Endothelial cell of umbilical vein (primary cell): ENCODE measurements at regions of chr1 and their contacts with region 1.

Region 1: GRCh38 chr1:244272471-244273261 is 179.0 kb downstream of the ADSS2 start:
- DNase-seq: peak; percentile 95
- H3K4me3 ChIP-seq: no peak overlapping the region
- H3K27ac ChIP-seq: peak overlapping the region; percentile 58
- H3K4me1 ChIP-seq: peaks cover 21% of the 10 kb centered on the region
- H3K27me3 ChIP-seq: no peaks in the 10 kb centered on the region
- CTCF ChIP-seq: peak; percentile 77 to 97
- POLR2A ChIP-seq: no peak

Region 2: GRCh38 chr1:243471754-243472745 is 800.6 kb before region 1 on chr1:
- CTCF ChIA-PET with region 1: no interaction called
- POLR2A ChIA-PET with region 1: no interaction called
- dilution Hi-C with region 1: no loop called
- intact Hi-C with region 1: loop called (anchors 2 kb)
- DNase-seq: peak; percentile 75
- H3K4me3 ChIP-seq: no peak overlapping the region
- H3K27ac ChIP-seq: peak overlapping the region; percentile 19
- H3K4me1 ChIP-seq: peaks cover 18% of the 10 kb centered on the region
- H3K27me3 ChIP-seq: no peaks in the 10 kb centered on the region
- CTCF ChIP-seq: no peak
- POLR2A ChIP-seq: no peak

Region 3: DNA sequence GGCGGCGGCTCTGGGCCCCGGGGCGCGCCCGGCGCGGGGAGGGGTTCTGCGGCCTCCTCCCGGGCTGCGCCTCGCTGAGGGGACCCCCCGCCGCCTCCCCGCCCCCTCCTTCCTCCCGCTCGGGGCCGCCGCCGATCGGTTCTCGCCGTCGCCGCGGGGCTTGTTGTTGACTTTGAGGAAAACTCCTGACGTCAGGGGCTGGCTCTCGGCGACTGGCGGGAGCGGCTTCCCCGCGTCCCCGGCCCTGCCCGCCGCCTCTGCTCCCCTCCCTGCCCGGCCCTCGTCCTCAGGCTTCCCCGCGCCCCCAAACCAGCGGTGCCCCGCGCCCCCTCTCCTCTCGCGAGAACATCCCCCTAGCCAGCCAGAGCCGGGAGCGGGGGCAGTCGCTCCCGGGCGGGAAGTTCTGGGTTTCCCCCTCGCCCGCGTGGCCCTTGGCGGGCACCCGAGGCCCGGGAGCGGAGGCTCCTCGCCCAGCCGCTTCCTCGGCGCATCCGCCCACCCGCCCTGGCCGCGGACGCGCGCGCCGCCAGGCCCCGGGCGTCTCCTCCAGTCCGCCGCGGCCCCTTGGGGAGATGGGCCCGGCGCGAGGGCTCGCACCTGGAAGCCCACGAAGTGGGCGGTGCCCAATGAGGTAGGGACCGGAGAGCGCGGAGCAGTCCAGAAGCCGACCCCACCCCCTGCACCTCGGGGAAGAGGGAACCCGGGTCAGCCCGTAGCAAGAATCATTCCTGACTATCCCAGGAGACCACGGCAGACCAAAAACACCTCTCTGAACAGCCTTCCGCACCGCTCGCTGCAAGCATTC is 422.0 kb before region 1 on chr1:
- CTCF ChIA-PET with region 1: no interaction called
- POLR2A ChIA-PET with region 1: no interaction called
- dilution Hi-C with region 1: no loop called
- intact Hi-C with region 1: loop called (anchors 1 kb)
- DNase-seq: peak; percentile 80
- H3K4me3 ChIP-seq: peak overlapping the region; percentile 36 to 71 (median 61)
- H3K27ac ChIP-seq: peak overlapping the region; percentile 93
- H3K4me1 ChIP-seq: peaks cover 17% of the 10 kb centered on the region
- H3K27me3 ChIP-seq: no peaks in the 10 kb centered on the region
- CTCF ChIP-seq: no peak
- POLR2A ChIP-seq: peak; percentile 28

Region 4: DNA sequence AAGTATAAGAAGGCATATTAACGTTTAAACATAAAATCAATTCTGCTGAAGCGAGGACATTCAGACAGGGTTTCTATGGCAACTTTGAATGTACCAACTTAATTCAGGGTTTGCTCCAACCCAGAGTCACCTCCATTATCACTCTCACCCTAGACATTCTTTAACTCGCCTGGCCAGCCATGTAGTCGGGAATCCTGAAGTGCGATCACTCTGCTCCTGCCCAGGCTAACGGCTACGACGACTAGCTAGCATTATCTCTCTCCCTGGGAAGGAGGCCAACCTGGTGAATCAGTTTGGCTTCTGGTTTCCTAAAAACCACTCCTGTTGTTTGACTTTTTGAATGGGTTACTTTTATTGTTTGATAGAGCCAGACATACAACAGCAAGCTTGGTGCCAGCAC is 260.5 kb before region 1 on chr1:
- CTCF ChIA-PET with region 1: interaction called, 5 read pairs
- POLR2A ChIA-PET with region 1: no interaction called
- dilution Hi-C with region 1: no loop called
- intact Hi-C with region 1: loop called (anchors 2 kb)
- DNase-seq: peak; percentile 74
- H3K4me3 ChIP-seq: peak overlapping the region in 1 of 3 experiments; percentile 25
- H3K27ac ChIP-seq: no peak overlapping the region
- H3K4me1 ChIP-seq: peaks cover 24% of the 10 kb centered on the region
- H3K27me3 ChIP-seq: no peaks in the 10 kb centered on the region
- CTCF ChIP-seq: no peak
- POLR2A ChIP-seq: no peak

Region 5: DNA sequence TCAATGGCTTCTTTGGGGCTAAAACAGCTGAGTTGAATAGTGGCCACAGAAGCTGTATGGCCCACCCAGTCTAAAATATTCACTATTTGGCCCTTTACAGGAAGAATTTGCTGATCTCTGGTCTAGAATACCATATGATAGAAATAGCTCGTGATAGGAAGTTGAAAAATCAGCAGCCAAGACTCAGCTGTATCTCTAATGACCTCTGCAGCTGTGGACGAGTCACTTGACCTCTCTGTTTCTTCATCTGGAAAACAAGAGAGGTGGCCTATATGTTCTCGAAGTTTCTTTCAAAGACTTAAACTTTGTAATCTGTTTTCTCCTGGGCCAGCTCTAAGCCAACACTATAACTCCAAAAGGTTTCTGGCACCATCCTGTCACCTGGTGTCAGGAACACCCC is 92.4 kb before region 1 on chr1:
- CTCF ChIA-PET with region 1: no interaction called
- POLR2A ChIA-PET with region 1: no interaction called
- dilution Hi-C with region 1: no loop called
- intact Hi-C with region 1: no loop called
- DNase-seq: peak; percentile 69
- H3K4me3 ChIP-seq: no peak overlapping the region
- H3K27ac ChIP-seq: peak overlapping the region; percentile 35
- H3K4me1 ChIP-seq: peaks cover 8% of the 10 kb centered on the region
- H3K27me3 ChIP-seq: no peaks in the 10 kb centered on the region
- CTCF ChIP-seq: no peak
- POLR2A ChIP-seq: no peak

Region 6: GRCh38 chr1:244214009-244214967 is 58.4 kb before region 1 on chr1:
- CTCF ChIA-PET with region 1: interaction called, 4 read pairs
- POLR2A ChIA-PET with region 1: no interaction called
- dilution Hi-C with region 1: no loop called
- intact Hi-C with region 1: loop called (anchors 2 kb)
- DNase-seq: peak; percentile 98
- H3K4me3 ChIP-seq: no peak overlapping the region
- H3K27ac ChIP-seq: peak overlapping the region; percentile 84
- H3K4me1 ChIP-seq: peaks cover 16% of the 10 kb centered on the region
- H3K27me3 ChIP-seq: no peaks in the 10 kb centered on the region
- CTCF ChIP-seq: no peak
- POLR2A ChIP-seq: peak; percentile 27

Region 7: GRCh38 chr1:244406337-244406736 is 133.7 kb after region 1 on chr1:
- CTCF ChIA-PET with region 1: no interaction called
- POLR2A ChIA-PET with region 1: no interaction called
- dilution Hi-C with region 1: no loop called
- intact Hi-C with region 1: no loop called
- DNase-seq: no peak
- H3K4me3 ChIP-seq: no peak overlapping the region
- H3K27ac ChIP-seq: no peak overlapping the region
- H3K4me1 ChIP-seq: no peaks in the 10 kb centered on the region
- H3K27me3 ChIP-seq: no peaks in the 10 kb centered on the region
- CTCF ChIP-seq: no peak
- POLR2A ChIP-seq: no peak

Region 8: DNA sequence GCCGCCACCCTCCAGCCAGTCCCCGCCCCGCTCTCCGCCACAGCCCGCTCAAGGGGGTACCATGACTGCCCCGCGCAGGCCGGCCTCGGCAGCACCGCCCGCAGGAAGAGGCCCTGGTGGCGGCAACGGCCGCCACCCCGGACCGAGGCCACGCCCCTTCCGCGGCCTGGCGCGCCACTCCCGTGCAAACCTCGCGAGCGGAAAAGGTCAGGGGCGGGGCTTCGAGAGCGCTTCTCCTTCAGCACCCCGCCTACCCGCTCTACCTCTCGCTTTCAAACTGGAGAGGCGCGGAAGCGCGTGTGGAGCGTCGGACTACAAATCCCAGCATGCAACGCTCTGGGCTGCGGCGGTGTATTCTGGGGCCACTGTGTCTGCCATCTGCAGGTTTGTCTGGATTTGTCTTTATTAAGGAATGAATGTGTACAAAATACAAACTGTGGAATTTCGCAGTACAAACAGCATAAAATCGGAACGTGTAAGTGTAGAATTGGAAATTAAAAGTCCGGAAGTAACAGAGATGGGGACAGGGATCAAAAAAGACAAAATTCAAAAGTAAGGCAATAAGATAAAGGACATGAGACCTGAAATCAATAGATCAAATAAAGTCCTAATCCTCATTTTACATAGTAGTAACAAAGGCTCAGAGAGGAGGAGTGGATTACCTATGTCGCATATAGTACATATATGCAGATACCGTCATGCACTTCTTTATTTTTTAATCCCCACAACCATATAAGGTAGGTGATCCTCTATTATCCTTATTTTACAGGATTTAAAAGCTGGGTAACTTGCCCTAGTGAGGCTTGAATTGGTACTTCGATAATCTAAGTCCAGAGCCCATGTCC is 179.5 kb after region 1 on chr1:
- CTCF ChIA-PET with region 1: no interaction called
- POLR2A ChIA-PET with region 1: no interaction called
- dilution Hi-C with region 1: no loop called
- intact Hi-C with region 1: loop called (anchors 1 kb)
- DNase-seq: peak; percentile 99
- H3K4me3 ChIP-seq: peak overlapping the region in 2 of 3 experiments; percentile 66 to 94
- H3K27ac ChIP-seq: peak overlapping the region; percentile 42
- H3K4me1 ChIP-seq: peaks cover 39% of the 10 kb centered on the region
- H3K27me3 ChIP-seq: no peaks in the 10 kb centered on the region
- CTCF ChIP-seq: peak; percentile 55 to 60
- POLR2A ChIP-seq: no peak

Region 9: GRCh38 chr1:244896550-244896949 is 623.9 kb after region 1 on chr1:
- CTCF ChIA-PET with region 1: no interaction called
- POLR2A ChIA-PET with region 1: no interaction called
- dilution Hi-C with region 1: no loop called
- intact Hi-C with region 1: no loop called
- DNase-seq: peak; percentile 86
- H3K4me3 ChIP-seq: no peak overlapping the region
- H3K27ac ChIP-seq: peak overlapping the region; percentile 57
- H3K4me1 ChIP-seq: peaks cover 6% of the 10 kb centered on the region
- H3K27me3 ChIP-seq: no peaks in the 10 kb centered on the region
- CTCF ChIP-seq: no peak
- POLR2A ChIP-seq: no peak